CD8-positive, alpha-beta T cell (primary cell): ENCODE measurements at regions of chr13 and their contacts with region 1.

Region 1: DNA sequence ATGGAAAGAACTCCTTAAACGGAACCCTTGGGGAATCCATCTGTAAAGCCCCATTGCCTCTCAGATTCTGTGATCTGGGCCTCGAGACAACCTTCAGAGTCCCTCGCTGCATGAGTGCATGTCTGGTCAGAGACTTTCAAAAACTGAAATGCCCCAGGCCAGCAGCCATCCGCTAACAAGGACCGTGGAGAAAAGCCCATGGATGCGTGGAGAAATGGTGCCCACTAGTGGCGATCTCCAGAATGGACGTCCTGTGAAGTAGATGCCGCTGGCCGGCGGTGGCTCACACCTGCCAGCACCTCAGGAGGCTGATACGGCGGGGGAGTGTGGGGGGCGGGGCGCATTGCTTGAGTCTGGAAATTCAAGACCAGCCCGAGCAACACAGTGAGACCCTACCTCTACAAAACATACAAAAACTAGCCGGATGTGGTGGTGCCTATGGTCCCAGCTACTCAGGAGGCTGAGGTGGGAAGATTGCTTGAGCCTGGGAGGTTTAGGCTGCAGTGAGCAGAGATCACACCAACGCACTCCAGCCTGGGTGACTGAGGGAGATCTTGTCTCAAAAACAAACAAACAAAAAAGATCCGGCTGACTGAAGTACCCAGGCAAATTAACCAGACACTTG is 7.9 kb upstream of the CDC16 start:
- DNase-seq: peak; percentile 72 to 91 (median 87)
- ATAC-seq: peak; percentile 82
- H3K4me3 ChIP-seq: no peak overlapping the region
- H3K4me3 Mint-ChIP-seq: peak overlapping the region; percentile 54
- H3K27ac ChIP-seq: no peak overlapping the region
- H3K27ac Mint-ChIP-seq: peak overlapping the region; percentile 86
- H3K4me1 ChIP-seq: peaks cover 40% of the 10 kb centered on the region
- H3K4me1 Mint-ChIP-seq: peaks cover 42% of the 10 kb centered on the region
- H3K27me3 ChIP-seq: no peaks in the 10 kb centered on the region
- H3K27me3 Mint-ChIP-seq: peaks cover 6% of the 10 kb centered on the region
- CTCF ChIP-seq: peak; percentile 93

Region 2: GRCh38 chr13:113951246-113951999 is 275.4 kb before region 1 on chr13:
- CTCF ChIA-PET with region 1: no interaction called
- POLR2A ChIA-PET with region 1: no interaction called
- intact Hi-C with region 1: loop called (anchors 1 kb)
- DNase-seq: peak; percentile 14 to 70 (median 36)
- ATAC-seq: peak; percentile 75
- H3K4me3 ChIP-seq: no peak overlapping the region
- H3K4me3 Mint-ChIP-seq: no peak overlapping the region
- H3K27ac ChIP-seq: no peak overlapping the region
- H3K27ac Mint-ChIP-seq: peak overlapping the region; percentile 57
- H3K4me1 ChIP-seq: peaks cover 3% of the 10 kb centered on the region
- H3K4me1 Mint-ChIP-seq: peaks cover 4% of the 10 kb centered on the region
- H3K27me3 ChIP-seq: no peaks in the 10 kb centered on the region
- H3K27me3 Mint-ChIP-seq: no peaks in the 10 kb centered on the region
- CTCF ChIP-seq: no peak

Region 3: GRCh38 chr13:114043421-114044053 is 183.3 kb before region 1 on chr13:
- CTCF ChIA-PET with region 1: no interaction called
- POLR2A ChIA-PET with region 1: no interaction called
- intact Hi-C with region 1: loop called in 1 of 2 experiments (anchors 5 kb)
- DNase-seq: peak in 3 of 9 experiments; percentile 28 to 53 (median 43)
- ATAC-seq: peak; percentile 44
- H3K4me3 ChIP-seq: no peak overlapping the region
- H3K4me3 Mint-ChIP-seq: no peak overlapping the region
- H3K27ac ChIP-seq: no peak overlapping the region
- H3K27ac Mint-ChIP-seq: peak overlapping the region; percentile 80
- H3K4me1 ChIP-seq: peaks cover 45% of the 10 kb centered on the region
- H3K4me1 Mint-ChIP-seq: peaks cover 53% of the 10 kb centered on the region
- H3K27me3 ChIP-seq: no peaks in the 10 kb centered on the region
- H3K27me3 Mint-ChIP-seq: no peaks in the 10 kb centered on the region
- CTCF ChIP-seq: no peak

Region 4: GRCh38 chr13:114119196-114119595 is 107.6 kb before region 1 on chr13:
- CTCF ChIA-PET with region 1: interaction called, 5 read pairs
- POLR2A ChIA-PET with region 1: no interaction called
- intact Hi-C with region 1: loop called in 1 of 2 experiments (anchors 2 kb)
- DNase-seq: peak in 2 of 9 experiments; percentile 24 to 27
- ATAC-seq: no peak
- H3K4me3 ChIP-seq: peak overlapping the region; percentile 8 to 11
- H3K4me3 Mint-ChIP-seq: peak overlapping the region; percentile 71
- H3K27ac ChIP-seq: peak overlapping the region; percentile 4 to 63
- H3K27ac Mint-ChIP-seq: peak overlapping the region; percentile 79
- H3K4me1 ChIP-seq: peaks cover 82% of the 10 kb centered on the region
- H3K4me1 Mint-ChIP-seq: peaks cover 79% of the 10 kb centered on the region
- H3K27me3 ChIP-seq: no peaks in the 10 kb centered on the region
- H3K27me3 Mint-ChIP-seq: no peaks in the 10 kb centered on the region
- CTCF ChIP-seq: no peak

Region 5: DNA sequence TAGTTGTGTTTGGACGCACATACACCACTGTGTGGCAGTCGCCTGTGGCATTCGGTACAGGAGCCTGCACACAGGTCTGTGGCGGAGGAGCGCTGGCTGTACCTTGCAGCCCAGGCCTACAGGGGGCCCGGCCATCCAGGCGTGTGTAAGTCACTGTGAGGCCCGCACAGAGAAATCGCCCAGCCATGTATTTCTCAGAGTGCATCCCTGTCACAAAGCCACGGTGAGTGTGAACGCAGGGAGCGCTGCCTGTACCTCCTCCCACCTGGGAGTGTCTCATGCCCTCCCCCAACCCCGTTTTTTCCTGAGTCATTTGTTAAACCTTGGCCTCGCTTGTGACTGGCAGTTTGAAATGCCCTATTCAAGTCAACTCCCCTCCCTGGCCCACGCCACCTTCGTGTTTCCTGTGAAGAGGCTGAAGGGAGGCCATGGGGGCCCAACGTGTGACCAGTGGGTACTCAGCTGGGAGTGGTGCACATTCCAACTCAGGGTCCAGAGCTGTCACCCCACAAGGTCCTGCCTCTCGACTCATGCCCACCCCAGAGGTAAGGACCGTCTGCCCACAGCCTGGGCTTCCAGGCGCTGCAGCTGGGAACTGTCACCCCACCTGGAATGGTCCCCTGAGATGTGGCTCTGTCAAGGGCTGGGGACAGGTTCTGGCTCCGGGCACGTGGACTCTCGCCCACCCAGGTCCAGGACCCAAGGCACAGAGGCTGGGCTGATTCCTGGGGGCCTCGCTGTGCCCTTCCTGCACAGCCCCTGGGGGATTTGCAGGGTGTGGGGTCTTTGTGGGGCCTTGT is 82.8 kb before region 1 on chr13:
- CTCF ChIA-PET with region 1: interaction called, 9 read pairs
- POLR2A ChIA-PET with region 1: interaction called, 15 read pairs
- intact Hi-C with region 1: loop called (anchors 1 to 2 kb)
- DNase-seq: peak in 7 of 9 experiments; percentile 46 to 81 (median 73)
- ATAC-seq: peak; percentile 15
- H3K4me3 ChIP-seq: peak overlapping the region in 1 of 2 experiments; percentile 23
- H3K4me3 Mint-ChIP-seq: no peak overlapping the region
- H3K27ac ChIP-seq: peak overlapping the region; percentile 80 to 86
- H3K27ac Mint-ChIP-seq: no peak overlapping the region
- H3K4me1 ChIP-seq: peaks cover 85% of the 10 kb centered on the region
- H3K4me1 Mint-ChIP-seq: peaks cover 12% of the 10 kb centered on the region
- H3K27me3 ChIP-seq: no peaks in the 10 kb centered on the region
- H3K27me3 Mint-ChIP-seq: no peaks in the 10 kb centered on the region
- CTCF ChIP-seq: peak; percentile 30